ENCODE measurements at regions of chr4 and their contacts with region 1.

Region 1: GRCh38 chr4:3480528-3481112 is 17.5 kb downstream of the DOK7 start:
- DNase-seq: peak; percentile 77
- H3K4me3 ChIP-seq: no peak overlapping the region
- H3K27ac ChIP-seq: no peak overlapping the region
- H3K4me1 ChIP-seq: no peaks in the 10 kb centered on the region
- H3K27me3 ChIP-seq: peaks cover 27% of the 10 kb centered on the region
- CTCF ChIP-seq: peak; percentile 97

Region 2: DNA sequence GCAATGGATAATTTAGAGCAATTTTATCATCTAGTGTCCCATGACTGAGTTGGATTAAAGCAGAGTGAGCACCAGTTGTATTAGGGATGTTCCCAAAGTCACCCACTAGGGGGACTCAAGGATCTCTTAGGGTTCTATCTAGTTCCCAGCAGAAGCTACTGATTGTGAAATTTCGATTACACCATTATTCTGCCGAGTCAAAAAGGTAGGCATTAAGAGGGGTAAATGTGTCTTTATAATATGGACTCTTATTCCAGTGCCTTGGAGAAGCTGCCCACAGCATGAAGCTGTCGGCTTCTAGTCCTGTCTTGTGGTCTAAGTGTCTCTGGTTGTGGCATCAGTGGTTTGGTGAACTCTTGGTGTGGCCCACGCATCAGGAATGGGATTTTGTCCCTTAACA is 134.5 kb before region 1 on chr4:
- CTCF ChIA-PET with region 1: interaction called, 7 read pairs
- POLR2A ChIA-PET with region 1: no interaction called
- intact Hi-C with region 1: loop called (anchors 1 kb)
- DNase-seq: peak; percentile 87
- H3K4me3 ChIP-seq: no peak overlapping the region
- H3K27ac ChIP-seq: peak overlapping the region; percentile 6
- H3K4me1 ChIP-seq: peaks cover 49% of the 10 kb centered on the region
- H3K27me3 ChIP-seq: no peaks in the 10 kb centered on the region
- CTCF ChIP-seq: peak; percentile 88

Region 3: GRCh38 chr4:3657902-3658529 is 177.4 kb after region 1 on chr4:
- CTCF ChIA-PET with region 1: no interaction called
- POLR2A ChIA-PET with region 1: no interaction called
- intact Hi-C with region 1: no loop called
- DNase-seq: peak; percentile 45
- H3K4me3 ChIP-seq: no peak overlapping the region
- H3K27ac ChIP-seq: peak overlapping the region; percentile 70
- H3K4me1 ChIP-seq: peaks cover 49% of the 10 kb centered on the region
- H3K27me3 ChIP-seq: no peaks in the 10 kb centered on the region
- CTCF ChIP-seq: no peak

Region 4: DNA sequence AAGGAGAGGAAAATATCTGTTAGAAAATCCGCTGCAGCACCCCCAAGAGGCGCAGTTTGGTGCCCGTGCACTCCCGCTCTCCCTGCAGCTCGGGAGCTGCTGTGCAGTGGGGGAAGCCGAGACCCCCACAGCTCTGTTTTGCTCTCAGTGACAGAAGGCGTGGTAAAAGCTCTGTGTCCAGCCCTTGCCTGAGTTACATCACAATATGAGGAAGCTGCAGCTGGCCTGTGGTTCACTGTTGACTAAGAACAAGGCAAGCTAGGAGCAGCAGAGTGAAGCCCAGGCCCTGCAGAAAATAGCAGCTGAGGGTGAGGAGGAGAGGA is 197.1 kb after region 1 on chr4:
- CTCF ChIA-PET with region 1: no interaction called
- POLR2A ChIA-PET with region 1: no interaction called
- intact Hi-C with region 1: no loop called
- DNase-seq: no peak
- H3K4me3 ChIP-seq: no peak overlapping the region
- H3K27ac ChIP-seq: no peak overlapping the region
- H3K4me1 ChIP-seq: no peaks in the 10 kb centered on the region
- H3K27me3 ChIP-seq: no peaks in the 10 kb centered on the region
- CTCF ChIP-seq: peak; percentile 31; the same call in 1 of the 2 replicates

Measured in A673 (cell line).